ENCODE measurements at regions of chr22 and their contacts with region 1.

Region 1: DNA sequence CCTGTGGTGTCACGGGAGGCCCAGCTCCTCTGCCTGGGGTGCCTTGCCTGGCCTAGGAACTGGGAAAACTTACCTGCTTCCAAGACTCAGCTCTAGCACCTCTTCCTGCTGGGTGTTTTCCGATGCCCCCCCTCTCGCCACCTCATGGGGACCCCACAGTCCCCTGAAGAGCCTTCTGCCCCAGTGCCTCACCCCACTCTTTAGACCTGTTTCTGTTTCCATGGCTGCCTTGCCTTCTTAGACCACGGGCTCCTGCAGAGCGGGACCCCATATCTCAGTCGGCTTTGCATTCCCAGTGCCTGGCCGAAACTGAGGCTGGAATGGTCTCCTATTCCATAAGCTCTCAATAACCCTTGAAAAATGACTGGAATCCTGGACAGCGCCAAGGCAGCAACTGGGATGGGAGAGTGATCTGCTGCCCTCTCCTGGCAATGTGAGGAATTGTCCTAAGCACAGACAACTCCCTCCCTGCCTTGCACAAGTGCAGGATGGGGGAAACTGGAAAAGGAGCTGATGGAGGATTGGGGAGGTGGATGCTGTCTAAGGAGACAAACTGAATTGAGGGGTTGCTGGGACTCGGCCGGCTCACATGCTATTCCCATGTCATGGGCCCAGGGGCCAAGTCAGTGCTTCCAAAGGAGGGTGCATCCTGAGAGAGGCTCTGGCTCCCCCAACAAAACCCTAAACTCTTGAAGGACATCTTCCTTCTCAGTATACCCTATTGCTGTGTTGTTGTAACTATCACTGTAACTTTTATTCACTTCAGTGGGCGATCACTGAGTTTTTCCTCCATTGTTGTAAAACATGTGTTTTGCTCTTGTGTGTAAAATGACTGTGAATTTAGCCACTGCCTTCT is 26.6 kb upstream of the IL17RA start:
- DNase-seq: peak; percentile 64
- ATAC-seq: peak; percentile 58
- H3K4me3 Mint-ChIP-seq: no peak overlapping the region
- H3K27ac Mint-ChIP-seq: no peak overlapping the region
- H3K4me1 Mint-ChIP-seq: peaks cover 1% of the 10 kb centered on the region
- H3K27me3 Mint-ChIP-seq: no peaks in the 10 kb centered on the region
- CTCF ChIP-seq: peak; percentile 97

Region 2: GRCh38 chr22:16917144-16918003 is 140.8 kb before region 1 on chr22:
- CTCF ChIA-PET with region 1: interaction called, 36 read pairs
- POLR2A ChIA-PET with region 1: no interaction called
- intact Hi-C with region 1: loop called (anchors 10 kb)
- DNase-seq: peak; percentile 83
- ATAC-seq: no peak
- H3K4me3 Mint-ChIP-seq: no peak overlapping the region
- H3K27ac Mint-ChIP-seq: no peak overlapping the region
- H3K4me1 Mint-ChIP-seq: peaks cover 2% of the 10 kb centered on the region
- H3K27me3 Mint-ChIP-seq: peaks cover 13% of the 10 kb centered on the region
- CTCF ChIP-seq: peak; percentile 78

Region 3: GRCh38 chr22:16925407-16925966 is 132.7 kb before region 1 on chr22:
- CTCF ChIA-PET with region 1: interaction called, 11 read pairs
- POLR2A ChIA-PET with region 1: no interaction called
- intact Hi-C with region 1: loop called (anchors 10 kb)
- DNase-seq: no peak
- ATAC-seq: no peak
- H3K4me3 Mint-ChIP-seq: no peak overlapping the region
- H3K27ac Mint-ChIP-seq: no peak overlapping the region
- H3K4me1 Mint-ChIP-seq: no peaks in the 10 kb centered on the region
- H3K27me3 Mint-ChIP-seq: peaks cover 19% of the 10 kb centered on the region
- CTCF ChIP-seq: no peak

Region 4: DNA sequence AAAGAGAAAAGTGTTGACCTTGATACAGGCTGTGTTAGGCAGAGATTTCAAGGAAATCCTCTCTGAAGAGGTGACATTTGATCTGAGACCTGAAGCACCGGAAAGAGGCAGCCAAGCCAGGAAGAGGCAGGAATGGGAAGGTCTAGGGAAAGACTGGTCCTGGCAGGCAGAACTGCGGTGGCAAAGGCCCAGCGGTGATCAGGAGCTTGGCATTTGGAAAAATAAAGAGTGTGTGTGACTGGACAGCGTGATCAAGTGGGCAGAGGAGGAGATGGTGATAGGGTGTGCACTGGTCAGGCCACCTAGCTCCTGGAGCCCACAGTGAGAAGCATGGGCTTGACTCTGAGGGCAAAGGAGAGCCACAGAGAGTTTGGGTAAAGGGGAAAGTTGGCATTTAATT is 22.9 kb before region 1 on chr22:
- CTCF ChIA-PET with region 1: interaction called, 11 read pairs
- POLR2A ChIA-PET with region 1: no interaction called
- intact Hi-C with region 1: no loop called
- DNase-seq: no peak
- ATAC-seq: no peak
- H3K4me3 Mint-ChIP-seq: no peak overlapping the region
- H3K27ac Mint-ChIP-seq: no peak overlapping the region
- H3K4me1 Mint-ChIP-seq: peaks cover 8% of the 10 kb centered on the region
- H3K27me3 Mint-ChIP-seq: peaks cover 18% of the 10 kb centered on the region
- CTCF ChIP-seq: no peak

Measured in activated CD8-positive, alpha-beta T cell treated with anti-CD3 and anti-CD28 coated beads for 36 hours (primary cell).